CD8-positive, alpha-beta T cell (primary cell): ENCODE measurements at regions of chr1 and their contacts with region 1.

Region 1: DNA sequence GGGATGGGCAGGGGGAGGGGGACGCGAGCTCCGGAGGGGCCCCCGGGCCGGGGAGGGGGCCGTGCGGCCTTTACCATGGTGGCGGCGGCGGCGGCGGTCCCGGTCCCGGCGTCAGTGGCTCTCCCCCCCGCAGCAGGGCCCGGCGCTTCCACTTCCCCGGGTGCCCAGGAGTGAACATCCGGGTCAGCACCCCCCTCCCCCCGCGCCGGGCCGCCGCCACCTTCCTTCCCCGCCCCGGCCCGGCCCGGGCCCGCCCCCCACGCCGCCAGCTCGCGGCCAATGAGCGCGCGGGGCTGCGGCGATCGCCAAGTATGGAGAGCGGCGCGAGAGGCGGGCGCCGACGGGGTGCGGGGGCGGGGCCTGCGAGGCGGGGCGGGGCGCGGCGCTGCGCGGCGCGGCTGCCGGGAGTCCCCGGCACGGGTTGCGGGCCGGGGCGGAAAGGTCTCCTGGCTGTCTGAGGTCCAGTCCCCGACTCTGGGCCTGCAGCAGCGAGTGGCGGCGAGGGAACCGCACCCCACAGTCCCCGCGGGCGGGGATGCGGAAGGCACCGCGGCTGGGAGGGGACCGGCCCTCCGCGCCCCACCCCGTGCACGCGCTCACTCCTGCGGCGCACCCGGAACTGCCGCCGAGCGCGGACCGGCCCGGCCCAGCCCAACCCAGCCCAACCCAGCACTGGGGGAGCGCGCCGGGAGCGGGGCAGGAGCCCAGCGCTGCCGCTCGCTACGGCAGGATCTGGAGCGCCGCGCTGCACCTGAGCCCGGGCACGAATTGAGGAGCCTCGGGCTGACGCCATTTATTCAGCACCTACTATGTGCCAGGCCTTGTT is at the start of gene CAPZB:
- DNase-seq: peak; percentile 87 to 97 (median 94)
- ATAC-seq: peak; percentile 85
- H3K4me3 ChIP-seq: peak within 1 kb of the TSS; percentile 85 to 96
- H3K4me3 Mint-ChIP-seq: peak within 1 kb of the TSS; percentile 91
- H3K27ac ChIP-seq: peak within 1 kb of the TSS; percentile 75 to 91
- H3K27ac Mint-ChIP-seq: peak within 1 kb of the TSS; percentile 97
- H3K4me1 ChIP-seq: peaks cover 59% of the 10 kb centered on the region
- H3K4me1 Mint-ChIP-seq: peaks cover 69% of the 10 kb centered on the region
- H3K27me3 ChIP-seq: no peaks in the 10 kb centered on the region
- H3K27me3 Mint-ChIP-seq: no peaks in the 10 kb centered on the region
- CTCF ChIP-seq: no peak
- total RNA-seq, gene CAPZB: 145 to 151 TPM

Region 2: DNA sequence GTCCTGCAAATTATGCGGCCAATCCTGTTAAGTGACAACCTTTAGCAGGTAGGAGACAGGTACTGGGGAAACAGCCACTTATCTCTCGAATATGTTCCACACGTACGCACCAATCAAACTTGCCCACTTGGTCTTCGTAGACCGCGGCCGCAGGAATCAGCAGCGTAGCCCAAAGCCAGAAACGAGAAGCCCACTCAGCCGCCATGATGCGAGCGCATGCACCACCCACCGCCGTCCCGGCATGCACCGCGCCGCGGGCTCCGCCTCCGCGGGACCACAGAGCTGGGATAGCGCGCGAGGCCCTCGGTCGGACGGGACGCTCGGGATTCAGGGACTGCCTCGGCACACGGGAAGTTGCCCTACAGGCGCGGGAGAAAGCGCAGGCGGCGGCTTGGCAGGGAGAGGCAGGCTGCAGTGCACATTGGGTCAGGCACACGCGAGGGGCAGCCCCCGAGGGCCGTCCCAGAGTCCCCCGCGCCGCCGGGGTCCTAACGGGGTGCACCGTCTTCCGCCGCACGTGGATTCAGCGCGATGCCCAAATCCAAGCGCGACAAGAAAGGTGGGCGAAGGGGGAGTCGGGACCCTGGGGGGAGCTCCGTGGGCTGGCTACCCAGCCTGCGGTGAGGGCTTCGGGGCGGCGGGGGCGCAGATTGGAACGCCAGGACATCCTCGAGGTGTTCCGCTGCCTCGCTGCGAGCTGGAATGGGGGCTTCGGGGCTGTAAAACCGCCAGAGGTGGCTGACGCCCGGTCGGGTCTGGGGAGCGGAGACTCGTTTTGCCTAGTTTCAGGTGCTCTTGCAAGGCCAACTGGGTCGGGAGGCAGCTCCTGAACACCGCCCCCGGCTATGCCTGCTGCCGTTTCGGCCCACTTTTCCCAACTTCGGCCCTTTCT is 234.0 kb before region 1 on chr1 and contains the starts of genes EMC1 and MRTO4:
- CTCF ChIA-PET with region 1: interaction called, 3 read pairs
- POLR2A ChIA-PET with region 1: interaction called, 3 read pairs
- intact Hi-C with region 1: loop called (anchors 2 to 5 kb)
- DNase-seq: peak; percentile 83 to 94 (median 87)
- ATAC-seq: peak; percentile 93
- H3K4me3 ChIP-seq: peak within 1 kb of the TSS; percentile 66 to 88
- H3K4me3 Mint-ChIP-seq: peak within 1 kb of the TSS; percentile 95
- H3K27ac ChIP-seq: peak within 1 kb of the TSS; percentile 83 to 98
- H3K27ac Mint-ChIP-seq: peak within 1 kb of the TSS; percentile 94
- H3K4me1 ChIP-seq: peaks cover 34% of the 10 kb centered on the region
- H3K4me1 Mint-ChIP-seq: peaks cover 38% of the 10 kb centered on the region
- H3K27me3 ChIP-seq: no peaks in the 10 kb centered on the region
- H3K27me3 Mint-ChIP-seq: no peaks in the 10 kb centered on the region
- CTCF ChIP-seq: no peak
- total RNA-seq, gene EMC1: 28.2 to 33.5 TPM
- total RNA-seq, gene MRTO4: 18.9 to 19.5 TPM

Region 3: GRCh38 chr1:19439464-19440171 is 46.0 kb before region 1 on chr1:
- CTCF ChIA-PET with region 1: interaction called, 12 read pairs
- POLR2A ChIA-PET with region 1: interaction called, 6 read pairs
- intact Hi-C with region 1: no loop called
- DNase-seq: peak; percentile 14 to 69 (median 58)
- ATAC-seq: peak; percentile 82
- H3K4me3 ChIP-seq: no peak overlapping the region
- H3K4me3 Mint-ChIP-seq: peak overlapping the region; percentile 22
- H3K27ac ChIP-seq: peak overlapping the region in 1 of 2 experiments; percentile 37
- H3K27ac Mint-ChIP-seq: peak overlapping the region; percentile 85
- H3K4me1 ChIP-seq: peaks cover 80% of the 10 kb centered on the region
- H3K4me1 Mint-ChIP-seq: peaks cover 90% of the 10 kb centered on the region
- H3K27me3 ChIP-seq: no peaks in the 10 kb centered on the region
- H3K27me3 Mint-ChIP-seq: no peaks in the 10 kb centered on the region
- CTCF ChIP-seq: peak; percentile 47

Region 4: DNA sequence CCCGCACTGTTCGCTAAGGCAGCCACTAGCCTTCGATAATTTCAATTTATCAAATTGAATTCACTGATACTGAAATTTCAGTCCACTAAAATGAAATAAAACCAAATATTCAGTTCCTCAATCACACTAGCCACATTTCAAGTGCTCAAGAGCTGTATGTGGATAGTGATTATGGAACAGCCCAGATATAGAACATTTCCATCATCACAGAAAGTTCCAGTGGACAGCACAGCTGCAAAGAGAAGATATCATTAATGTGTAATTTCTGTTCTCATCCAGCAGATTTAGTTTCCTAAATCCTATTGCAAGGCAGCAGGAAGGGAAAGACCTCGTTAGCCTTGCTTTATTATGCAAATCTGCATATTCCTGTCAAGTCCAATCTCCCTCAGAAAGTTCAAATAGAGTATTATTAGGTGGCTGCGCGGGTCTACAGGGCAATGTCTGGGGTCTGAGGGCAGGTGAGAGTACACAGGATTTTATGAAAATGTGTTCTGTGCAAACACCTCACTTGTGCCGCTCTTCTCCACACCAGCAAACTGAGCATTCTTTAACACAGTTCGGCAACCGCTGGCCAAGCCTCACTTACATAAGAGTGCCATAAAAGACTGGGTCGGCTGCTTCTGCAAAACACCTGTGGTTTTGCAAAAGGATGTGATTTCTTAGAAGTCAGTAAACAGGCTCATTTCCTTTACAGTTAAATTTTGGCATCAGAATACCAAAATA is 22.6 kb before region 1 on chr1:
- CTCF ChIA-PET with region 1: interaction called, 22 read pairs
- POLR2A ChIA-PET with region 1: interaction called, 193 read pairs
- intact Hi-C with region 1: loop called (anchors 1 kb)
- DNase-seq: peak; percentile 55 to 90 (median 73)
- ATAC-seq: peak; percentile 76
- H3K4me3 ChIP-seq: peak overlapping the region; percentile 6 to 43
- H3K4me3 Mint-ChIP-seq: peak overlapping the region; percentile 80
- H3K27ac ChIP-seq: peak overlapping the region; percentile 71 to 78
- H3K27ac Mint-ChIP-seq: peak overlapping the region; percentile 96
- H3K4me1 ChIP-seq: peaks cover 98% of the 10 kb centered on the region
- H3K4me1 Mint-ChIP-seq: peaks cover 87% of the 10 kb centered on the region
- H3K27me3 ChIP-seq: no peaks in the 10 kb centered on the region
- H3K27me3 Mint-ChIP-seq: no peaks in the 10 kb centered on the region
- CTCF ChIP-seq: no peak

Region 5: DNA sequence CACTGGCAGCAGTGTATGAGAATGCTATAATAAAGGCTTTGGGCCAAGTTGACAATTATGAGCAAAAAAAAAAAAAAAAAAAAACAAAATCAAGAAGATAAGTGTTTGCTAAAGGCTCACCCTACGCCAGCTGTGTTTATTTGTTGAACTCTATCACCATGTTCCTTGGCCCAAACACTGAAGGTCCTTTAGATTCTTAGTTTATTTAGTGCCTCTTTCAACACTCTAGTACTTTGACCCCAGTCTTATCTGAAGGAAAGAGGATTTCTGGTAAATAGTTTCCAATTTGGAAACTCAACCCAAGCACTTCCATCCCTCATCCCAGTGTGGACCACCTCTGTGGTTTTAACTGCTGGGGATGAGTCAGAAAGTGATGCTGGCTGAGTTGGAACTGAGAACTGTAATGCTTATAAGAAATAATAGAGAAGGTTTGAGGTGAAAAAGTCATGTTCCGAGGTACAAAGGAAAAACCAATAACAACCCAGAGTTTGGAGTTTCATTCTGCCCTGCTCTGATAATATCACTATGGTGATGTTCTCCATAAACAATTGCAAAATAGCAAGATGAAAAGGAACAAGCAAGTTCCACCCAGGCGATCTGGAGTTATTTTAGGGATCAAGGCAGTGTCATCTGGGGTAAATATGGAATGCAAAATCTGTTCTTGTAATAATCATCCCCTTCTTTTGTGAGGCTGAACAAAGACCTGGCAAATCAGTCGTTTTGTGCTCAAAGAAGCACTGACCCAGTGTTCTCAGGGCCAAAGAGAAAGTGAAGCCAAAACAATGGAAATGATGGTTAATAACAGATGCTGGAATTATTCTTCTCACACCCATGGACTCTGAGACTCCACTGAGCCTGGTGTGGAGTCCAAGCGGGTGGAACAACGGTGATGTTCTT is 19.5 kb after region 1 on chr1:
- CTCF ChIA-PET with region 1: interaction called, 3 read pairs
- POLR2A ChIA-PET with region 1: interaction called, 3 read pairs
- intact Hi-C with region 1: loop called in 1 of 2 experiments (anchors 2 kb)
- DNase-seq: no peak
- ATAC-seq: no peak
- H3K4me3 ChIP-seq: no peak overlapping the region
- H3K4me3 Mint-ChIP-seq: no peak overlapping the region
- H3K27ac ChIP-seq: no peak overlapping the region
- H3K27ac Mint-ChIP-seq: no peak overlapping the region
- H3K4me1 ChIP-seq: peaks cover 9% of the 10 kb centered on the region
- H3K4me1 Mint-ChIP-seq: peaks cover 11% of the 10 kb centered on the region
- H3K27me3 ChIP-seq: no peaks in the 10 kb centered on the region
- H3K27me3 Mint-ChIP-seq: no peaks in the 10 kb centered on the region
- CTCF ChIP-seq: no peak

Region 6: DNA sequence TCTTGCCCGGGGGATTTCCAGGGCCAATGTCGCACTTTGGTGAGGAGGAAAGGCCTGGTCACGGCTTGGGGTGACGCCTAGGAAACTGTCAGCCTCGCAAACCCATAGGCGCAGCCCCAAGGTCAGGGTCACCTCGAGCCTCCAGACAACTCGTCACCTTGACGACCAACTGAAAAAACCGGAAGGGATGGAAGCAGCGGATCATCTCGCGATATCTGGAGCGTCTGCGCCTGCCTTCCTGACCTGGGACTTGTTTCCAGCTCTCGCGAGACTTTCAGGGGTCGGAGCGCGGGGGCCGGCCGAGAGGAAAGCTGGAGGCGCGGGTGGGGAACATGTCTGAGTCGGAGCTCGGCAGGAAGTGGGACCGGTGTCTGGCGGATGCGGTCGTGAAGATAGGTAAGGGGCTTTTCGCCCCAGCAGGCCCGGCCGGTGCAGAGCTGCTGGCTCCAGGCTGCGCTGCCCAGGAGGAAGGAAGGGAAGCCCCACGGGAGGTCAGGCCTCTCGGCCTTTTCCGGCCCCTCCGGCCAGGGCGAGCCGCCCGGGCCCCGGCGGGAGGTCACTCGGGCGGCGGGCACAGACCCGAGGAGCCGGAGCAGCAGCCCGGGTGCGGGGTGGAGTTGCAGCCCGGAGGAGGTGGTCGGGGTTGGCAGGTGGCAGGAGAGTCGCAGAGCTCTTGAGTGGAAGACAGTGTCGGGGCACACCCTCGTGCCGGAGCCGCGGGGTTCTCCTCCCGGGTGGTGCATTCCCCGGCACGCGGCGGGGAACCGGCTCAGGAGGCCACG is 111.3 kb after region 1 on chr1:
- CTCF ChIA-PET with region 1: interaction called, 13 read pairs
- POLR2A ChIA-PET with region 1: interaction called, 28 read pairs
- intact Hi-C with region 1: loop called (anchors 1 kb)
- DNase-seq: peak; percentile 92 to 100 (median 96)
- ATAC-seq: peak; percentile 69
- H3K4me3 ChIP-seq: peak overlapping the region; percentile 67 to 76
- H3K4me3 Mint-ChIP-seq: peak overlapping the region; percentile 92
- H3K27ac ChIP-seq: peak overlapping the region; percentile 96 to 99
- H3K27ac Mint-ChIP-seq: peak overlapping the region; percentile 100
- H3K4me1 ChIP-seq: peaks cover 50% of the 10 kb centered on the region
- H3K4me1 Mint-ChIP-seq: peaks cover 48% of the 10 kb centered on the region
- H3K27me3 ChIP-seq: no peaks in the 10 kb centered on the region
- H3K27me3 Mint-ChIP-seq: no peaks in the 10 kb centered on the region
- CTCF ChIP-seq: no peak

Region 7: GRCh38 chr1:19651141-19651737 is 165.7 kb after region 1 on chr1:
- CTCF ChIA-PET with region 1: interaction called, 9 read pairs
- POLR2A ChIA-PET with region 1: interaction called, 4 read pairs
- intact Hi-C with region 1: loop called (anchors 2 kb)
- DNase-seq: peak; percentile 25 to 71 (median 54)
- ATAC-seq: peak; percentile 58
- H3K4me3 ChIP-seq: no peak overlapping the region
- H3K4me3 Mint-ChIP-seq: no peak overlapping the region
- H3K27ac ChIP-seq: no peak overlapping the region
- H3K27ac Mint-ChIP-seq: no peak overlapping the region
- H3K4me1 ChIP-seq: peaks cover 17% of the 10 kb centered on the region
- H3K4me1 Mint-ChIP-seq: peaks cover 18% of the 10 kb centered on the region
- H3K27me3 ChIP-seq: no peaks in the 10 kb centered on the region
- H3K27me3 Mint-ChIP-seq: no peaks in the 10 kb centered on the region
- CTCF ChIP-seq: peak; percentile 44

Region 8: GRCh38 chr1:19715334-19716203 is 230.0 kb after region 1 on chr1:
- CTCF ChIA-PET with region 1: no interaction called
- POLR2A ChIA-PET with region 1: no interaction called
- intact Hi-C with region 1: no loop called
- DNase-seq: peak; percentile 54 to 88 (median 81)
- ATAC-seq: peak; percentile 100
- H3K4me3 ChIP-seq: no peak overlapping the region
- H3K4me3 Mint-ChIP-seq: no peak overlapping the region
- H3K27ac ChIP-seq: no peak overlapping the region
- H3K27ac Mint-ChIP-seq: no peak overlapping the region
- H3K4me1 ChIP-seq: no peaks in the 10 kb centered on the region
- H3K4me1 Mint-ChIP-seq: peaks cover 11% of the 10 kb centered on the region
- H3K27me3 ChIP-seq: no peaks in the 10 kb centered on the region
- H3K27me3 Mint-ChIP-seq: no peaks in the 10 kb centered on the region
- CTCF ChIP-seq: peak; percentile 77